CD4-positive, alpha-beta memory T cell (primary cell): ENCODE measurements at regions of chr10 and their contacts with region 1.

Region 1: GRCh38 chr10:101840741-101841453 is 2.7 kb downstream of the KCNIP2 start:
- DNase-seq: peak; percentile 61 to 72 (median 65)
- H3K4me3 ChIP-seq: peak overlapping the region; percentile 17 to 34
- H3K4me3 Mint-ChIP-seq: peak overlapping the region; percentile 82 to 99 (median 90)
- H3K27ac ChIP-seq: no peak overlapping the region
- H3K27ac Mint-ChIP-seq: peak overlapping the region in 6 of 7 donors; percentile 30 to 92 (median 78)
- H3K4me1 ChIP-seq: peaks cover 41% of the 10 kb centered on the region
- H3K4me1 Mint-ChIP-seq: peaks cover 29 to 62% (median 42%) of the 10 kb centered on the region in 4 donors
- H3K27me3 ChIP-seq: no peaks in the 10 kb centered on the region
- H3K27me3 Mint-ChIP-seq: no peaks in the 10 kb centered on the region

Region 2: GRCh38 chr10:101818119-101818871 is 22.6 kb before region 1 on chr10 and contains the start of gene OGA:
- CTCF ChIA-PET with region 1: interaction called, 88 read pairs
- POLR2A ChIA-PET with region 1: interaction called, 204 read pairs
- intact Hi-C with region 1: loop called (anchors 1 kb)
- DNase-seq: peak; percentile 97 to 100 (median 99)
- H3K4me3 ChIP-seq: peak within 1 kb of the TSS; percentile 95
- H3K4me3 Mint-ChIP-seq: peak within 1 kb of the TSS; percentile 94 to 100 (median 98)
- H3K27ac ChIP-seq: peak within 1 kb of the TSS; percentile 85
- H3K27ac Mint-ChIP-seq: peak within 1 kb of the TSS; percentile 91 to 100 (median 97)
- H3K4me1 ChIP-seq: peaks cover 47% of the 10 kb centered on the region
- H3K4me1 Mint-ChIP-seq: peaks cover 31 to 59% (median 42%) of the 10 kb centered on the region in 4 donors
- H3K27me3 ChIP-seq: no peaks in the 10 kb centered on the region
- H3K27me3 Mint-ChIP-seq: no peaks in the 10 kb centered on the region
- total RNA-seq, gene OGA: 307 to 325 TPM

Region 3: DNA sequence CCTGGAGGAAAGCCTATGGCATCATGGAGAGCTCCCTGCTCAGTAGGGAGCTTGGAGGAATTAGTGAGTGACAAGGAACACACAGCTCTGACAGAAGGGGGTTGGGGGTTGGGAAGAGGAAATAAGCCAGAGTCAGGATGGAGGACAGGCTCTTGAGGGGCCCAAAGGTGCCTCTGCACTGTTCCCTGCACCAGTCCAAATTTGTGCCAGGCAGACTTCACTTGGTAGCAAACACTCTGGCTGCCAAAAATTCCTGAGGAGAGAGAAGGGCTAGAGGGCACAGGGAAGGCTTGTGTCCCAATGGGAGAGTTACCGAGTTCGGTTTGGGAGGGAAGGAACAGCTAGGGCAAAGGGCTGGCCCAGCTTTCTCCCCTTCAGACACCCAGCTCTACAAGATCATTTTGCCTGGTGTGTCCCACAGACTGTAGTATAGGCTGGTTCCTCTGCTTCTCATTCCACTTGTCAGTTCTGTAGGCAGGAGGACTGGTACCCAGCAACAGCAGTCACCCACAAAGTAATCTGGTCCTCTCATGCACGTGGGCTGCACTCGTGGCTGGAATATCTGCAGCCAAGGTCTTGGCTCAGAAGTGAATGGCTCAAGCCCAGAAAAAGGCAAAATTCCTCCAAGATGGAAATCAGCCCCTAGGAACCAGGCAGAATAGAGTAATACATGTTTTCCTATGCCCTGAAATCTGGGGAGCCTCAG is 10.7 kb after region 1 on chr10:
- CTCF ChIA-PET with region 1: interaction called, 74 read pairs
- POLR2A ChIA-PET with region 1: no interaction called
- intact Hi-C with region 1: no loop called
- DNase-seq: no peak
- H3K4me3 ChIP-seq: no peak overlapping the region
- H3K4me3 Mint-ChIP-seq: no peak overlapping the region
- H3K27ac ChIP-seq: no peak overlapping the region
- H3K27ac Mint-ChIP-seq: no peak overlapping the region
- H3K4me1 ChIP-seq: no peaks in the 10 kb centered on the region
- H3K4me1 Mint-ChIP-seq: no peaks in the 10 kb centered on the region
- H3K27me3 ChIP-seq: no peaks in the 10 kb centered on the region
- H3K27me3 Mint-ChIP-seq: no peaks in the 10 kb centered on the region

Region 4: GRCh38 chr10:101889256-101890210 is 48.6 kb after region 1 on chr10:
- CTCF ChIA-PET with region 1: interaction called, 11 read pairs
- POLR2A ChIA-PET with region 1: no interaction called
- intact Hi-C with region 1: loop called (anchors 2 kb)
- DNase-seq: peak; percentile 42 to 61 (median 52)
- H3K4me3 ChIP-seq: no peak overlapping the region
- H3K4me3 Mint-ChIP-seq: no peak overlapping the region
- H3K27ac ChIP-seq: no peak overlapping the region
- H3K27ac Mint-ChIP-seq: peak overlapping the region in 3 of 7 donors; percentile 3 to 5 (median 3)
- H3K4me1 ChIP-seq: no peaks in the 10 kb centered on the region
- H3K4me1 Mint-ChIP-seq: peaks cover 0 to 4% (median under 1%) of the 10 kb centered on the region in 4 donors
- H3K27me3 ChIP-seq: no peaks in the 10 kb centered on the region
- H3K27me3 Mint-ChIP-seq: no peaks in the 10 kb centered on the region

Region 5: DNA sequence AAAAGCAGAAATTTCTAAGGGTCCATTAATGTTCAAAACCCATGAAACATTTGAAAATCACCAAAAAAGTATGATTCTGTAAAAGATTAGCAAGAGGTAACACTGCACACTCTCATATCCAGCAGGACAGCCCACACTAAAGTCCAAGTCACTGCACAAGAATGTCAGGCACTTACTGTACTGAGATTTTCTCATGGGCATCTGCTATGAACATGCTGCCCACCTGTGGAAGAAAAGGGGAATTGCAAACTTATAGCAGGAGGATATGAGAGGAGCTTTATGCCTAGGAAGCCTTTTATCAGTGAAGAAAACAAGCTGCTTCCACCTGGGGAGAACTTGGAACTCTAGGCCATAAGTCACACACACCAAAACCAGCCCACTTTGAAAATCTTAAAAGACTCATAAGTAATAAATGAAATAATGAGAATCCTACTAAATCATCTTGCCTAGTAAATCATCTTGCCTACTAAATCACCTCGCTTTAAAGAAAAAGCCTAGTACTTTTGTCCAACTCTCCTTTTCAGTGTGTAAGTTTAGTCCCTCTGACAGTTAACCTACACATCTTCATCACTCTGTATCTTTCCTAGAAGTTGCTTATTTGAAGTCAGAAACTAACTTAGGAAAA is 169.0 kb after region 1 on chr10:
- CTCF ChIA-PET with region 1: interaction called, 70 read pairs
- POLR2A ChIA-PET with region 1: interaction called, 5 read pairs
- intact Hi-C with region 1: loop called (anchors 1 kb)
- DNase-seq: peak; percentile 48 to 61 (median 53)
- H3K4me3 ChIP-seq: no peak overlapping the region
- H3K4me3 Mint-ChIP-seq: no peak overlapping the region
- H3K27ac ChIP-seq: no peak overlapping the region
- H3K27ac Mint-ChIP-seq: peak overlapping the region in 4 of 7 donors; percentile 3 to 67 (median 38)
- H3K4me1 ChIP-seq: no peaks in the 10 kb centered on the region
- H3K4me1 Mint-ChIP-seq: peaks cover 0 to 5% (median 4%) of the 10 kb centered on the region in 4 donors
- H3K27me3 ChIP-seq: no peaks in the 10 kb centered on the region
- H3K27me3 Mint-ChIP-seq: no peaks in the 10 kb centered on the region

Region 6: DNA sequence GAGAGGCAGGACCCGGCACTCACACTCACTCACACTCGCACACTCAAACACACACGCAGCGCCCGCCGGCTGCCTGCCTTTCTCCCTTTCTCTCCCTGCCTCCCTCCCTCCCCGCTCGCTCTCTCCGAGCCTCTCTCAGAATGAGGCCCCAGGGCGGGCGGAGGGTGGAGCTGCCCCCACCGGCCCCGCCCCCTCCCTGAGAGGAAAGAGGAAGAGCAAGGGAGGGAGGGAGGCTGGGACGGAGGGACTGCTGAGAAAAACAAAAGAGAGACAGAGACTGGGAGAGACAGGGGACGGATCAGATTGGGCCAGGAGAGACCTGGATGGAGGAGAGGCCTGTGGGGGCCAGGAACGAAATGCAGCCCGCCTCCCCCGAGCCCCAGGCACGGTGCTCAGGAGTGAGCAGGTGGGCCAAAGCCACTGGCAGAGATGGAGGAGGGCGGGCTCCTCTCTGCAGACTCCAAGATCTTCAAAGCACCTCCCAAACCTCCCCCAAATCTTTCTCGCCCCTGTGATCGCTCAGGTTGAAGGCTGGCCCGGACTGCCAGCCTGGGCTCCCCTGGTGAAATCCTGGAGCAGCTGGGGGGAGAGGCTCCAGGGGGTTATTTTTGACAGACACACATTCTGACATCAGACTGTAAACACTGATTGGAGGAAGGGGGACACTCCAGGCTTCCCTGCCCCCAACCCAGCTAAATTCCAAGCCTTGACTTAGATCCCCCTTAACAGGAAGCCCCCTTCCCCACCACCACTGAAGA is 274.1 kb after region 1 on chr10:
- CTCF ChIA-PET with region 1: interaction called, 10 read pairs
- POLR2A ChIA-PET with region 1: no interaction called
- intact Hi-C with region 1: loop called (anchors 5 kb)
- DNase-seq: peak; percentile 69 to 86 (median 73)
- H3K4me3 ChIP-seq: peak overlapping the region; percentile 50 to 54
- H3K4me3 Mint-ChIP-seq: peak overlapping the region; percentile 85 to 97 (median 93)
- H3K27ac ChIP-seq: peak overlapping the region; percentile 90
- H3K27ac Mint-ChIP-seq: peak overlapping the region; percentile 89 to 97 (median 96)
- H3K4me1 ChIP-seq: peaks cover 67% of the 10 kb centered on the region
- H3K4me1 Mint-ChIP-seq: peaks cover 44 to 77% (median 61%) of the 10 kb centered on the region in 4 donors
- H3K27me3 ChIP-seq: no peaks in the 10 kb centered on the region
- H3K27me3 Mint-ChIP-seq: no peaks in the 10 kb centered on the region